Activated CD4-positive, alpha-beta T cell treated with anti-CD3 and anti-CD28 coated beads for 36 hours (primary cell): ENCODE measurements at regions of chr1 and their contacts with region 1.

Region 1: DNA sequence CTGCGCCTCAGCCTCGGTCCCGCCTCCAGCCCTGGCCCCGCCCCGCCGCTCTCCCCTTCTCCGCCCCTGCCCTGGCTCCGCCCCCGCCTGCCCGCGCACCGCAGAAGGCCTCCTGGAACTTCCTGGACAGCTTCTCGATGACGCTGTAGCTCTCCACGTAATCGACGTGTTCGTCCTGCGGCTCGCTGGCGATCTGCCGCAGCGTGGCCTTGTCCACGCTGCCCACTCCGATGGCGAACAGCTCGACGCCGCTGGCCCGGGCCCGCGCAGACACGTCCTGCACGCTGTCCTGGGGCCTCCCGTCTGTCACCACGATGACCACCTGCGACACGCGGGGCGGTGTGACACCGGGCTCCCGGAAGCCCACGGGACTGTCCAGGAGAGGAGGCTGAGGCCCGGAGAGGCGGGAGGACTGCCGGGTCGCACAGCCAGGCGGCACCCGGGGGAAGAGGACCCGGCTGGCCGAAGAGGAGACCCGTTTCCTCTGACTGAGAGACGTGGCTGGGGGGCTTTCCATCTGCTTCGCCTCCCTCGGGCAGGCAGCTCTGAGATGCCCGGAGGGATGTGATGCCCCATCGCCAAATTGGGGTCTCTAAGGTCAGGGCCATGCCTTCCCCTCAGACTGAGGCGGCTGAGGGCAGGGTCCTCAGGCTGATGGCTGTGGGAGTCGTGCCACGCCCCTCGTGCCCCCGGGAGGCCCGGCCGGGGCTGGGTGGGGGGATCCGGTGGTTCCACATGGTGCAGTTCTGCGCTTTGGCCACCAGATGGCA is 4.6 kb downstream of the MATN1 start:
- DNase-seq: peak; percentile 91
- ATAC-seq: peak; percentile 66
- H3K4me3 Mint-ChIP-seq: peak overlapping the region; percentile 84
- H3K27ac Mint-ChIP-seq: peak overlapping the region; percentile 94
- H3K4me1 Mint-ChIP-seq: peaks cover 19% of the 10 kb centered on the region
- H3K27me3 Mint-ChIP-seq: no peaks in the 10 kb centered on the region

Region 2: GRCh38 chr1:29711582-29712283 is 1007.1 kb before region 1 on chr1:
- CTCF ChIA-PET with region 1: no interaction called
- POLR2A ChIA-PET with region 1: no interaction called
- intact Hi-C with region 1: loop called in 1 of 2 experiments (anchors 10 kb)
- DNase-seq: peak; percentile 77
- ATAC-seq: peak; percentile 74
- H3K4me3 Mint-ChIP-seq: no peak overlapping the region
- H3K27ac Mint-ChIP-seq: peak overlapping the region; percentile 21
- H3K4me1 Mint-ChIP-seq: peaks cover 38% of the 10 kb centered on the region
- H3K27me3 Mint-ChIP-seq: peaks cover 23% of the 10 kb centered on the region

Region 3: DNA sequence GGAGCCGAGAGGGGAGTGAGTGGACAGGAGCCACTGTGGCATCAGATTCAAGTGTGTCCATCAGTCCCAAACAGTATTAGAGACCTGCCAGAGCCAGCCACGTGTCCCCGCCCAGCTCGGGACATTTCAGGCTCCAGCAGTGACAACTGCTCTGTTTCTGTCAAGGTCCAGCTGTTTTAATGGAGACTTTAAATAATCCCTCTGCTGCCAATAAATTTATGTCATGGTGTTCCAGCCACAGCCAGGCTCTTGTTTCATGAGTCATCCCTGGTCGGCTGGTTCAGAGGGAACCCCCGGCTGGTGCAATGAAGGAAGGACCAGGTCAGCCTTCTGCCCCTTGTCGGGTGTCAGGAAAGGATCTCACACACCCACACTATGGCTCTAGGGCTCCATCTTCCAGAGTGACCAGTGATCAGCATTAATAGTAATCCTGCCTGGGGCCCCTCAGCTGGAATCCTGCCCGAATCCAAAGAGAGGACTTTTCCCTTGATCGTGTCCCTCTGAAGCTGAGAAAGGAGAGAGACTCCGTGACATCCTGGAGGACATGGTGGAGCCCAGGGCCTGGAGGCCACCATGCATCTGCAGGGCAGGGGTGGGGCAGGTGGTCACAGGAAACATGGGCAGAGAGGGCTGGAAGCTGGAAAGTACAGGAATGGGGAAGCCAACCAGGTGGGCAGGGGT is 192.7 kb before region 1 on chr1:
- CTCF ChIA-PET with region 1: no interaction called
- POLR2A ChIA-PET with region 1: no interaction called
- intact Hi-C with region 1: no loop called
- DNase-seq: no peak
- ATAC-seq: no peak
- H3K4me3 Mint-ChIP-seq: no peak overlapping the region
- H3K27ac Mint-ChIP-seq: no peak overlapping the region
- H3K4me1 Mint-ChIP-seq: no peaks in the 10 kb centered on the region
- H3K27me3 Mint-ChIP-seq: peaks cover 15% of the 10 kb centered on the region

Region 4: DNA sequence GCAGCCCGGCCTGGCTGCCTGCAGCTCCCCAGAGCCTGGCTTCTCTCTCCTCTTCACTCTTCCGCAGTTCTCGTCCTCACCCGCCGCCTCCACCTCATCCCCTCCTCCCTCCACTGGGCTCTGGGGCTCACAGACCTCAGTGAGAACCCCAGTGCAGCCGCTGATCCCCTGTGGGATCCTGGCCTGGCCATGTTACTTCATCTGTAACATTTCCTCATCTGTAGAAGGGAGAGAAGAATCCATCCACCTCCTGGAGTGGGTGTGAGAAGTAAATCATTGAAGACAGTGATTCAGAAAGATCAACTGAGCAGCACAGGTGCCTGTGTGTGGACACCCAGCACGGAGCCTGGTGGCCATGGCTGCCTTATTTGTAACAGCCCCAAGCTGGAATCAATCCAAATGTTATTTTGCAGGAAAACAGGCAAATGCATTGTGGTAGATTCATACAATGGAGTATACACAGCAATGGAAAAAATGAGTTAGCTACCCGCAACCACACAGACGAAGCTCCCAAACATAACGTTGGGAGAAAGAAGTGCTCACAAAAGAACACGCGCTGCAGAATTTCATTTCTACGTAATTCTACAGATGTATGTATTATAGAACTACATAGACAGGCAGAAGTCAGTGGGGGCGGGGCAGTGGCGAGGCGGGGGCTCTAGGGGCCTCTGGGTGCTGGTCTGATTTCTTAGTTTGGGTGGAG is 30.0 kb after region 1 on chr1:
- CTCF ChIA-PET with region 1: interaction called, 47 read pairs
- POLR2A ChIA-PET with region 1: interaction called, 3 read pairs
- intact Hi-C with region 1: loop called (anchors 1 to 2 kb)
- DNase-seq: peak; percentile 71
- ATAC-seq: peak; percentile 29
- H3K4me3 Mint-ChIP-seq: peak overlapping the region; percentile 71
- H3K27ac Mint-ChIP-seq: peak overlapping the region; percentile 99
- H3K4me1 Mint-ChIP-seq: peaks cover 98% of the 10 kb centered on the region
- H3K27me3 Mint-ChIP-seq: no peaks in the 10 kb centered on the region

Region 5: GRCh38 chr1:30779294-30780071 is 60.7 kb after region 1 on chr1:
- CTCF ChIA-PET with region 1: interaction called, 229 read pairs
- POLR2A ChIA-PET with region 1: interaction called, 14 read pairs
- intact Hi-C with region 1: loop called (anchors 1 kb)
- DNase-seq: peak; percentile 95
- ATAC-seq: peak; percentile 78
- H3K4me3 Mint-ChIP-seq: no peak overlapping the region
- H3K27ac Mint-ChIP-seq: no peak overlapping the region
- H3K4me1 Mint-ChIP-seq: peaks cover 15% of the 10 kb centered on the region
- H3K27me3 Mint-ChIP-seq: no peaks in the 10 kb centered on the region

Region 6: DNA sequence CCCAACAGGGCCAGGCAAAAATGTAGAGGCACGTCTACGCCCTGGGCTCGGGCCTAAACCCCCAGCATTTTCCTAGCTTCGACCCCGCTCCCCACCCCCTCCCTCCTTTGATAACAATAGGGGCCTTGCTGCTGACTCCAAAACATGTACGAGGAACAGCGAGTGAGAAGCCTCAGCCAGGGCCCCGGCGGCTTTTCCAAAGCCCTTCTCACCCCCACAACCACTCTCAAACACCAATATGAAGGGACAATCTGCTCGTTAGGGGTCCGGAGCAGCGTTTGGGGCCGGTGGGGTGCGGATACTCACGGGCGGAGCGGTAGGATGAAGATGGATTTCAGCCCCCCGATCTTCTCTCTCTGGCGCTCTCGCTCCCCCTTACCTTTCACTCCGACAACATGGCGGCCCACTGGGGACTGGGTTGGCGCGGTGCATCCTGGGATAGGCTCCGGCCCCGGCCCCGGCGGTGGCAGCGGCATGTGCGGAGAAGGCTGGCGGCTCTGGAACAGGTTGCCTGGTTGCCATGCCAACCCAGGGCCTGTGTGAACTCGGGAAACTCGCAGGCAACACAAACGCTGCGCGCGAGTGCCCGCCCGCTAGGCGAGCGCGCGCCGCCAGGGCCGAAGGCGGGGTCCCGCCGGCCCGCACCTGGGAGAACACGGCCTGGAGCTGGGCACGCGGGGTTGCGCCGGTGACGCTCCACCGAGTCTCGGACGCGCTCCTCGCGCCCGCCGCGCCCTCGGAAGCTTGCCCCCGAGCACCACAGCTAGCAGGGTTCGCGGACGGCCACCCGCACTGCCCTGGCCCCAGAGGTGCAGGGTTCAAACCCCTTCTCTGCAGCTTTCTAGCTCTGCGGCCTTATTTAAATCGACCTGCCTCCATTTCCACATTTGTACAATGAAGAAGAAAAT is 346.7 kb after region 1 on chr1 and contains the start of gene PUM1:
- CTCF ChIA-PET with region 1: no interaction called
- POLR2A ChIA-PET with region 1: no interaction called
- intact Hi-C with region 1: loop called in 1 of 2 experiments (anchors 1 kb)
- DNase-seq: peak; percentile 99
- ATAC-seq: peak; percentile 97
- H3K4me3 Mint-ChIP-seq: peak within 1 kb of the TSS; percentile 92
- H3K27ac Mint-ChIP-seq: peak within 1 kb of the TSS; percentile 99
- H3K4me1 Mint-ChIP-seq: peaks cover 22% of the 10 kb centered on the region
- H3K27me3 Mint-ChIP-seq: no peaks in the 10 kb centered on the region
- total RNA-seq, gene PUM1: 87.1 to 91.4 TPM

Region 7: DNA sequence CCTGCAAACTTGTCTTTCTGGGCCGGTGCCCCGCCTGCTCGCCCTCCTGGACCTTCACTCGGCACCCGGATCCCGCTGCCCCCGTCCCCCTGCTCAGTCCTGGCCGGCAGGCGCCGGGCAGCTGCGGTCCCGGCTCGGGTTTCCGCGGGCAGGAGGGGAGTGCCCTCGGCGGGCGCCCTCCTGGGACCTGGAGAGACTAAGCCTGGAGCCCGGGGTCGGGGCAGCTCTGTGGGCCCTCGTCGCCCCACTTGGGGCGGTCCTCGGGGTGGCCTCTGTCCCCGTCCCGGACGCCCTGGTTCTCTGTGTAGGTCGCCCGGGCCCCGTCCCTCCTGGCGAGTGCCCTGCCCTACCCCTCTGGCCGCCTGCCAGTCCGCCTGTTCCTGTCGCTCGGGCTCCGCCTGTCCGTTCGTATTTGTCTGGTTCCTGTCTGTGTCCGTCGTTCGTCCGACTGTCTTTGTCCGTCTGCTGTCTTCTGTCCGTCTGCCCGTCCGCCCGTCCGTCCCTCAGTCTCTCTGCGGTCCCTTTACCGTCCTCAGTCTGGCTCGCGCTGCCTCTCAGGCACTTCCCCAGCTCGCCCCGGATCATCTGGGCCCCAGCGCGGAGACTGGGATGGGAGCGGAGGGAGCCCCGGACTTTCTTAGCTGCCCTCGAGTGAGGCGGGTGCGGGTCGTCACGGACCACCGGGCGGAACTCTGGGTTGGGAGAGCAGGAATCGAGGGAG is 694.7 kb after region 1 on chr1:
- CTCF ChIA-PET with region 1: no interaction called
- POLR2A ChIA-PET with region 1: no interaction called
- intact Hi-C with region 1: loop called in 1 of 2 experiments (anchors 10 kb)
- DNase-seq: peak; percentile 40
- ATAC-seq: peak; percentile 53
- H3K4me3 Mint-ChIP-seq: peak overlapping the region; percentile 73
- H3K27ac Mint-ChIP-seq: no peak overlapping the region
- H3K4me1 Mint-ChIP-seq: peaks cover 8% of the 10 kb centered on the region
- H3K27me3 Mint-ChIP-seq: peaks cover 55% of the 10 kb centered on the region